PC-3 (cell line): ENCODE measurements at regions of chr12 and their contacts with region 1.

Region 1: GRCh38 chr12:41950455-41950854 is 194.2 kb downstream of the GXYLT1 start:
- DNase-seq: no peak
- ATAC-seq: no peak
- H3K4me3 ChIP-seq: no peak overlapping the region
- H3K27ac ChIP-seq: no peak overlapping the region
- H3K4me1 ChIP-seq: no peaks in the 10 kb centered on the region
- H3K27me3 ChIP-seq: peaks cover 18% of the 10 kb centered on the region; the same call in 1 of the 2 replicates
- CTCF ChIP-seq: no peak

Region 2: DNA sequence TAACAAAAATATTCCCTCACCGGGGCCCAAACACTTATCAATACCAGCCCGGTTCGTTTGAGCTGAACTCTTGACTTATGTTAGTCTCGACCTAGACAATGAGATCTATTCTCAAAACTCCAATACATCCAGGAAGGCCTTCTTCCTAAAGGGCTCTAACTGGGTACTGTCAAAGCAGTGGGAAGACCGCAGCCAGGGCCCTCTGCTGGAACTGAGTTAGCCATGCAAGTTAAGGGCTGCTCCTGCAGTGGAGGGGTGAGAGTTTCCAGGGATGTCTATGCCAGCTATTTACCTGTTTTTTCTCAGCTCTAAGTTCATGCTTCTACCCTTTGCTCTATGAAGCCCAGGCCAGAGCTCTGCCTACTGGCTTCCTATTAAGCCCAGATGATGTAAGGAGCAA is 154.5 kb before region 1 on chr12:
- CTCF ChIA-PET with region 1: no interaction called
- POLR2A ChIA-PET with region 1: no interaction called
- intact Hi-C with region 1: no loop called
- DNase-seq: peak; percentile 27
- ATAC-seq: no peak; the same call in 1 of the 2 replicates
- H3K4me3 ChIP-seq: no peak overlapping the region
- H3K27ac ChIP-seq: no peak overlapping the region
- H3K4me1 ChIP-seq: no peaks in the 10 kb centered on the region
- H3K27me3 ChIP-seq: peaks cover 47% of the 10 kb centered on the region
- CTCF ChIP-seq: peak; percentile 47

Region 3: DNA sequence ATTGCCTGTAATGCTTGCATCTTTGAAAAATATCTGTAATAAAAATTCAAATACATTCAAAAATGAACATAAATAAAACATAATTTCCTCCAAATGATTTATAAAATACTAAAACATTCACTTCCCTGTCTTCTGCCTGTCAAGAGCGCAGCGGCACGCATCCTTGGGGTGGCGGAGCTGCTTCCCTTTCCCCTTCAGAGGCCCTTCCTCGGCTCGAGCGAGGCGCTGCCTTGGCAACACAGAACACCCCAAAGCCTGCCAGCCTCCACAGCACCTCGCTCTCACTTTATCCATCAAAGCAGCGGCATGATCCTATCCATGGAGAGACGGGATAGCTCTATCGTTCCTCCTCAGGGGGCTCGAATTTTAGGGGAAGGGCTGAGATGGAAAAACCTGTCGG is 48.0 kb after region 1 on chr12:
- CTCF ChIA-PET with region 1: no interaction called
- POLR2A ChIA-PET with region 1: no interaction called
- intact Hi-C with region 1: loop called (anchors 2 kb)
- DNase-seq: no peak
- ATAC-seq: no peak
- H3K4me3 ChIP-seq: no peak overlapping the region
- H3K27ac ChIP-seq: no peak overlapping the region
- H3K4me1 ChIP-seq: no peaks in the 10 kb centered on the region
- H3K27me3 ChIP-seq: peaks cover 39% of the 10 kb centered on the region
- CTCF ChIP-seq: no peak